SK-N-SH (cell line): ENCODE measurements at regions of chr15 and their contacts with region 1.

Region 1: GRCh38 chr15:65275728-65276126 is 11.0 kb downstream of the PARP16 start:
- DNase-seq: no peak
- H3K4me3 ChIP-seq: no peak overlapping the region
- H3K27ac ChIP-seq: no peak overlapping the region
- H3K4me1 ChIP-seq: peaks cover 0 to 6% of the 10 kb centered on the region in 2 experiments; a peak in 1 of 4 replicates
- H3K27me3 ChIP-seq: no peaks in the 10 kb centered on the region
- CTCF ChIP-seq: no peak
- EP300 ChIP-seq: no peak
- RAD21 ChIP-seq: no peak

Region 2: GRCh38 chr15:65201905-65202304 is 73.8 kb before region 1 on chr15:
- CTCF ChIA-PET with region 1: interaction called, 11 read pairs
- POLR2A ChIA-PET with region 1: no interaction called
- DNase-seq: no peak
- H3K4me3 ChIP-seq: no peak overlapping the region
- H3K27ac ChIP-seq: no peak overlapping the region
- H3K4me1 ChIP-seq: no peaks in the 10 kb centered on the region
- H3K27me3 ChIP-seq: no peaks in the 10 kb centered on the region; the same call in 1 of the 2 replicates
- CTCF ChIP-seq: no peak
- EP300 ChIP-seq: no peak
- RAD21 ChIP-seq: no peak

Region 3: DNA sequence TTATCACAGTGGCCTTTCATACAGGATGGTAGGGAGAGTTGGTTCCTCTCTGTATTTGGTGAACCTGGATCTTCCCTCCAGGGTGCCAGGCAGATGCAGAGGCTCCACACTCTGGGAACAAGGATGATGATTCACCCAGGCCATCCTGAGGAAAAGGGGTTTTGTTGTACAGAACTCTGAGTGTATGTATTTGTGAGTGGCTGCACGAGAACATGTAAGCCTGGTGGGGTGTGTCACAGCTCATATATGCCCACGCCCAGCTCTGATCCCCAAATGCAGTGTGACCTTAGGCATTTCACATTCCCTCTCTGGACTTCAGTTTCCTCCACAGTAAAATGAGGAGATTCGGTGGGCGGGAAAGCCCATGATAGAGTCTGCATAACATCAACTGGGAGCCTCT is 52.8 kb before region 1 on chr15:
- CTCF ChIA-PET with region 1: interaction called, 14 read pairs
- POLR2A ChIA-PET with region 1: no interaction called
- DNase-seq: no peak
- H3K4me3 ChIP-seq: no peak overlapping the region
- H3K27ac ChIP-seq: no peak overlapping the region
- H3K4me1 ChIP-seq: no peaks in the 10 kb centered on the region
- H3K27me3 ChIP-seq: no peaks in the 10 kb centered on the region
- CTCF ChIP-seq: no peak
- EP300 ChIP-seq: no peak
- RAD21 ChIP-seq: no peak

Region 4: DNA sequence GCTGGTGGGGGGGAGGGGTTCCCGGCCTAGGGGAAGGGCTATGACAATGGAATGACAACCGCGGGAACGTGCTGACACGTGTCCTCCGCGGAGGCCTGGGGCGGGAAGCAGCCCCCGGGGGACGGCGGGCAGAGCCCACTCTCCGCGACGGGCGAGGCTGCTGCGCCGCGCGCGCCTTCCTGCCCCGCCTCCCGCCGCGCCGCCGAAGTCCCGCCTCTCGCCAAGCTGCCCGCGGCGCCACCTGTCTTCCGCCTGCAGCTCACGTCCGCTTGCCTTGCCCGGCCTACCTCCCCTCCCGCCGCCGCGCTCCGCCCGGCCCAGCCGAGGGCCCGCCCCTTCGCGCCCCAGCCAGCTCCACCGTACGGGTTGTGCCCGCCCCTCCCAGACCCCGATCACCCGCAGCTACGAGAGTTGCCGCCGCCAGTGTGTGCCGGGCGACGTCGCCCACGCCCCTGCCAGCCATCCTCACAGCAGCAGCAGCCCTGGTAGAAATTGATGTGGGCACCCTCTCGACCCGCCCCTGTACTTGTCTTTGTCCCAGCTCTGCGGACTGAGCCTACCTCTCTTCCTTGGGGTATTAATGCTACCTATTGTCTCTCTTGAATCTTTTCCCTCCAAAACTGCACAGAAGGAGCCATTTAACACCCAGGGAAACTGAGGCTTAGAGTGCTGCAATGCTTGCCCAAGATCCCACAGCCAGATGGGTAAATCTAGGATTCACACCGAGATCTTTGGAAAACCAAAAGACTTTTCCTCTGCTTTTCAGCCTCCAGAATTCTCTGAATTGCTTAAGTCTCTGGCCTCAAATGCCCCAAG is 11.2 kb after region 1 on chr15 and contains the start of gene PARP16:
- CTCF ChIA-PET with region 1: interaction called, 28 read pairs
- POLR2A ChIA-PET with region 1: interaction called, 6 read pairs
- DNase-seq: peak; percentile 95
- H3K4me3 ChIP-seq: peak within 1 kb of the TSS; percentile 61 to 71
- H3K27ac ChIP-seq: peak within 1 kb of the TSS; percentile 37 to 81; a peak in 3 of 4 replicates
- H3K4me1 ChIP-seq: peaks cover 9 to 13% of the 10 kb centered on the region in 2 experiments; a peak in 3 of 4 replicates
- H3K27me3 ChIP-seq: no peaks in the 10 kb centered on the region
- CTCF ChIP-seq: peak; percentile 24
- EP300 ChIP-seq: no peak; a peak in 1 of 4 replicates
- RAD21 ChIP-seq: no peak
- polyA plus RNA-seq, gene PARP16: 6.3 and 6.5 TPM in 2 replicates